K562 (cell line): ENCODE measurements at regions of chr19 and their contacts with region 1.

Region 1: DNA sequence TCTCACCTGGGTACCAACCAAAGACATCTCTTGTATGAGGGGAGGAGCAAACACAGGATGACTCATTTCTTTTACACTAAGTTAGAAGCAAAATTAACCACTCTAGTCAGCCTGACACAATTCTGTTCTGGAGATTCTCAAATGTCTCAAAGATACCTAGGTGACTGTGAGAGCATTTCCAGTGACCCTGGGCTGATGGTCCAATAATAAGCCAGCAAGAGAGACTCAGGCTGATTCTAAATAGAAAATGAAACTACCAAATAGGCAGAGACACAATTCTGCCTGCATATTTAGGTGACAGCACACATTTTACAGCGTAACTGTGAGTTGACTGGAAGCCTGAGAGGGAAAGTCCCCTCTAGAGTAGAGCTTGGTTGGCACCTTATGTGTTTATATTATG is 16.3 kb downstream of the ZNF91 start:
- DNase-seq: no peak
- ATAC-seq: no peak
- H3K4me3 ChIP-seq: no peak overlapping the region
- H3K27ac ChIP-seq: no peak overlapping the region
- H3K4me1 ChIP-seq: no peaks in the 10 kb centered on the region
- H3K27me3 ChIP-seq: no peaks in the 10 kb centered on the region
- CTCF ChIP-seq: no peak
- EP300 ChIP-seq: no peak
- POLR2A ChIP-seq: no peak
- RAD21 ChIP-seq: no peak

Region 2: DNA sequence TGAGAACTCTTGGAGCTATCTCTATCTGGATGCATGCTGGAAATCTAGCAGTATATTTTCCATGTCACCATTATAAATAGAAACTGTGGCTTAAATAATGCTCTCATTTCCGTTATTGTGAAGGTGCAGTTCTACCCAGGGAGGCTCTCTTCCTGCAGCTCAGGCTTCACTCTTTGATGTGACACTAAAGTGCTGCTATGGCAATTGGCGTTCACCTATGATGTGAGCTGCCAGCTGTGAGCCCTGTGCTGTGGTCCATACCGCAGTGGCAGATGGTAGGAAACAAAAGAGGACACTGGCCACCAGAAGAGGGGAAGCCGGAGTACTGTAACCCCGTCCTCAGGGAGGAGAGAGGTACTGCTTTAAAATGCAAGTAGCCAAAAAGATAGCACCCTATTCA is 420.4 kb after region 1 on chr19:
- CTCF ChIA-PET with region 1: no interaction called
- POLR2A ChIA-PET with region 1: no interaction called
- in situ Hi-C with region 1: loop called (anchors 5 kb)
- intact Hi-C with region 1: no loop called
- DNase-seq: no peak
- ATAC-seq: no peak
- H3K4me3 ChIP-seq: no peak overlapping the region
- H3K27ac ChIP-seq: no peak overlapping the region
- H3K4me1 ChIP-seq: no peaks in the 10 kb centered on the region
- H3K27me3 ChIP-seq: no peaks in the 10 kb centered on the region
- CTCF ChIP-seq: no peak
- EP300 ChIP-seq: no peak
- POLR2A ChIP-seq: no peak
- RAD21 ChIP-seq: no peak